Breast epithelium (tissue), 4 donors: ENCODE measurements at regions of chr1 and their contacts with region 1.

Region 1: DNA sequence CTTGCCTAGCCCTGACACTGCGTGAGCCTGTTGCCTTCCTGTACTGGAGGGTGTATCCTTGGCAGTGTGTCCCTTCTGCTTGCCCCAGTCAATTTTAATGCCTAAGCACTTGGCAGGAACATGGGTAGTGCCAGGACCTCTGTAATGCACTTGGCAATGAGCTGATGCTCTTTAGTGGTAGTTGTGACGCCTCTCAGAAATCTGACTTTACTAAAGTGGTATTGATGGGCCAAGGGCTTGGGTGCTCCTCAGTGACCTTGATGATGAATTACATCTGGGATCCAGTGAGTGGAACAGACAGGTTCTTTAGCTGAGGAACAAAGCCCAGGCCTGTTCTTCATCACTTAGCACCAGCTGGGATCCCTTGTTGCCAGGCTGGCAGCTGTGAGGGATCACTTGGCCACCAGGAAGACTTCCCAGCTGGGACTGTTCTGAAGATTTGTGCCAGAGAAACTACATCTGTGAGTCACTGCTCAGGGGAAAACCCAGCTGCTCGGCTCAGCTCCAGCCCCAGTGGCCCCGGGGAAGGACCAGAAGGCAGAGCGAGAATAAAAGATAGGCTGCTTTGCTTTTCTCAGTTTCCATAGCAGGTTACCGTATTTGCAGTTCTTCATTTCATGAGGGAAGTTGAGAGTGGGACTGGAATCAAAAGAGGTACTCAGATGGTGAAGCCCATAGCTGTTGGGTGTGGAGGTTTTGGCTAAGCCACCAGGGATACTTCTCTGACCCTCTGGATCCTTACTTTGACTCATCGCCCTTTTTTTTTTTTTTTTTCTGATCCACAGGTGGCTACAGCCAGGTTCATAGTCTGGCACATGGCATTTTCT is 28.5 kb upstream of the KCNA2 start:
- DNase-seq: peak; percentile 59 to 66
- H3K4me3 ChIP-seq: no peak overlapping the region
- H3K27ac ChIP-seq: peak overlapping the region in 1 of 2 donors; percentile 36
- H3K4me1 ChIP-seq: no peaks in the 10 kb centered on the region
- H3K27me3 ChIP-seq: no peaks in the 10 kb centered on the region
- CTCF ChIP-seq: no peak
- POLR2A ChIP-seq: no peak

Region 2: GRCh38 chr1:110675060-110675791 is 40.6 kb after region 1 on chr1:
- intact Hi-C with region 1: no loop called
- DNase-seq: peak in 1 of 2 donors; percentile 50
- H3K4me3 ChIP-seq: peak overlapping the region; percentile 50 to 69 (median 58)
- H3K27ac ChIP-seq: peak overlapping the region; percentile 13 to 59
- H3K4me1 ChIP-seq: no peaks in the 10 kb centered on the region
- H3K27me3 ChIP-seq: peaks cover 6 to 51% of the 10 kb centered on the region in 2 donors
- CTCF ChIP-seq: no peak
- POLR2A ChIP-seq: no peak

Region 3: GRCh38 chr1:110686188-110686587 is 51.5 kb after region 1 on chr1:
- intact Hi-C with region 1: no loop called
- DNase-seq: no peak
- H3K4me3 ChIP-seq: no peak overlapping the region
- H3K27ac ChIP-seq: no peak overlapping the region
- H3K4me1 ChIP-seq: no peaks in the 10 kb centered on the region
- H3K27me3 ChIP-seq: peaks cover 0 to 21% of the 10 kb centered on the region in 2 donors
- CTCF ChIP-seq: no peak
- POLR2A ChIP-seq: no peak

Region 4: GRCh38 chr1:110770832-110771614 is 136.4 kb after region 1 on chr1:
- intact Hi-C with region 1: loop called (anchors 5 kb)
- DNase-seq: peak in 1 of 2 donors; percentile 60
- H3K4me3 ChIP-seq: no peak overlapping the region
- H3K27ac ChIP-seq: peak overlapping the region; percentile 45 to 47
- H3K4me1 ChIP-seq: peaks cover 0 to 3% of the 10 kb centered on the region in 2 donors
- H3K27me3 ChIP-seq: no peaks in the 10 kb centered on the region
- CTCF ChIP-seq: no peak
- POLR2A ChIP-seq: no peak